Caco-2 (cell line): ENCODE measurements at regions of chr17 and their contacts with region 1.

Region 1: GRCh38 chr17:76671123-76671911 is 27.8 kb upstream of the ST6GALNAC1 start:
- DNase-seq: peak; percentile 100
- H3K4me3 ChIP-seq: peak overlapping the region; percentile 43
- H3K4me3 Mint-ChIP-seq: peak overlapping the region; percentile 85
- H3K27ac Mint-ChIP-seq: peak overlapping the region; percentile 94
- H3K4me1 ChIP-seq: peaks cover 20% of the 10 kb centered on the region
- H3K4me1 Mint-ChIP-seq: peaks cover 42% of the 10 kb centered on the region
- H3K27me3 ChIP-seq: no peaks in the 10 kb centered on the region
- H3K27me3 Mint-ChIP-seq: no peaks in the 10 kb centered on the region
- CTCF ChIP-seq: no peak

Region 2: GRCh38 chr17:76515274-76515949 is 155.9 kb before region 1 on chr17:
- CTCF ChIA-PET with region 1: interaction called, 10 read pairs
- POLR2A ChIA-PET with region 1: no interaction called
- intact Hi-C with region 1: no loop called
- DNase-seq: no peak
- H3K4me3 ChIP-seq: no peak overlapping the region
- H3K4me3 Mint-ChIP-seq: no peak overlapping the region
- H3K27ac Mint-ChIP-seq: no peak overlapping the region
- H3K4me1 ChIP-seq: no peaks in the 10 kb centered on the region
- H3K4me1 Mint-ChIP-seq: no peaks in the 10 kb centered on the region
- H3K27me3 ChIP-seq: no peaks in the 10 kb centered on the region
- H3K27me3 Mint-ChIP-seq: no peaks in the 10 kb centered on the region
- CTCF ChIP-seq: no peak

Region 3: DNA sequence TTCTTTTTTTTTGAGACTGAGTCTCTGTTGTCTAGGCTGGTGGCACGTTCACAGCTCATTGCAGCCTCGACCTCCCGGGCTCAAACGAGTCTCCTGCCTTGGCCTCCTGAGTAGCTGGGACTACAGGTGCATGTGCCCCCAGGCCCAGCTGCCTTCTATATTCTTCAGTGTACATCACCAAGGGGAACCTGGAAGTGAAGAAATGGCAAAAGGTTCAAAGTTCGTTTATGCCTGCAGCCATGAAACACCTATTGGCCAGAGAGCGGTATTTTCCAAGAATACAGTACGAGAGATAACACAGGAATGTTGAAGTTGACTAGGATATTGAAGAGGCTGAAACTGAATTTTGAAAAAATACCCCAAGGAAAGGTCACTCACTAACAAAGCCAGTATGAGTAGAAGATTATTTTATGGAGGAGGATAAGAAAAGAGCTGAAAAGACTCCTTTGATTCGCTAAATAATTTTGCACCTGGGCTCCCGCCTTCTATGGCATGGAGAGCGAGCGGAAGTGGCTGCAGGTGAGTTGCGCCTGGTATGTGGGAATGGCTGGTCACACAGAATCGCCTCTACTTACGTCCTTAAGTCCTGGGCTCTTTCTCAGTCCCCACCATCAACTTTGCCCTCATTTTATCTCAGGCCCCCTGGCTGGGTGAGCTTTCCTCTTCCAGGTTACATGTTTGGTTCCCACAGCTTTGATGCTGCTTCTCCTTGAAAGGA is 37.5 kb before region 1 on chr17:
- CTCF ChIA-PET with region 1: no interaction called
- POLR2A ChIA-PET with region 1: interaction called, 4 read pairs
- intact Hi-C with region 1: loop called (anchors 1 kb)
- DNase-seq: peak; percentile 82 to 84
- H3K4me3 ChIP-seq: no peak overlapping the region
- H3K4me3 Mint-ChIP-seq: peak overlapping the region; percentile 47
- H3K27ac Mint-ChIP-seq: peak overlapping the region; percentile 81
- H3K4me1 ChIP-seq: peaks cover 61% of the 10 kb centered on the region
- H3K4me1 Mint-ChIP-seq: peaks cover 46% of the 10 kb centered on the region
- H3K27me3 ChIP-seq: no peaks in the 10 kb centered on the region
- H3K27me3 Mint-ChIP-seq: no peaks in the 10 kb centered on the region
- CTCF ChIP-seq: no peak

Region 4: GRCh38 chr17:76641501-76641900 is 29.8 kb before region 1 on chr17:
- CTCF ChIA-PET with region 1: interaction called, 4 read pairs
- POLR2A ChIA-PET with region 1: interaction called, 7 read pairs
- intact Hi-C with region 1: loop called (anchors 1 kb)
- DNase-seq: peak; percentile 80 to 85
- H3K4me3 ChIP-seq: no peak overlapping the region
- H3K4me3 Mint-ChIP-seq: no peak overlapping the region
- H3K27ac Mint-ChIP-seq: peak overlapping the region; percentile 80
- H3K4me1 ChIP-seq: peaks cover 60% of the 10 kb centered on the region
- H3K4me1 Mint-ChIP-seq: peaks cover 61% of the 10 kb centered on the region
- H3K27me3 ChIP-seq: no peaks in the 10 kb centered on the region
- H3K27me3 Mint-ChIP-seq: no peaks in the 10 kb centered on the region
- CTCF ChIP-seq: no peak

Region 5: DNA sequence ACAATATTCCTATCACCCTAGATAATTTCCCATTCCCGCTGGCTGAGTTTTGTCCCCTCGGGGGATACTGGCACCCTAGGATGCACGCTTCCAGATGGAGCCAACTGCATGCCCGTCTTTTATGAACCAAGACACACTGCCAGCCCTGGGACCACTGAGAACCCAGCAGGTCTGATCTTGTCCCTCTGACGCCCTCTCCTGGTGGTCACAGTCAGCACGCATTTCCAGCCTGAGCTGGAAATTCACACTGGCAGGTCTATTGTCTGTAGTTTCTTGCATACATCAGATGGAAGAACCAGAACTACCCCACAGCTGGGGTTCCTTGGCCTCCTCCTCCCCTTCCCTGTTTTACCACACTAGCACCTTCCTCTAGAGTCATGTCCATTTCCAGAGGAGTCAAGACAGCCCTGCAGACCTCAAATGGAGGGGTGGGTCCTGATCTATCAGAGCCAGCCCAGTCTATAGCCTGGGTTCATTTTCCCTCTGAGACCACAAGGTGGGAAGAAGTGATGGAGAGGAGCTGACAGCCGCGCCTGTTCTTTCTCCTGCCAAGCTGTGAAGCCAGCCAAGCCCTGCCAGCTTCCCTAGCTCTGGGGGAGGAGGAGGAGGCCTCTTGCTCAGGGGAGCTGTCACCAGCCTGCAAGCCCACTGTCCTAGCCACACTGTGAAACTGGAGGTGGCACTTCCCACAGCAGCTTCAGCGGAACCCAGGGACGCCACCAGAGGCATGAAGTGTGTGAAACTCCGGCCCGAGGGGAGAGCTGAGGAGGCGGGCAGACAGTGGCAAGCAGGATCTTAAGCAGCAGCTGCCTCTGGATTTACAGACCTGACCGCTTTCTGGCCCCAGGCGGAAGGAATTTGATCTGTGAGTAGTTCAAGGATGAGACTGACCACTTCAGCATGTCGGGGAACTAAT is 10.2 kb after region 1 on chr17:
- CTCF ChIA-PET with region 1: interaction called, 20 read pairs
- POLR2A ChIA-PET with region 1: interaction called, 6 read pairs
- intact Hi-C with region 1: no loop called
- DNase-seq: peak; percentile 80
- H3K4me3 ChIP-seq: no peak overlapping the region
- H3K4me3 Mint-ChIP-seq: no peak overlapping the region
- H3K27ac Mint-ChIP-seq: no peak overlapping the region
- H3K4me1 ChIP-seq: peaks cover 14% of the 10 kb centered on the region
- H3K4me1 Mint-ChIP-seq: no peaks in the 10 kb centered on the region
- H3K27me3 ChIP-seq: no peaks in the 10 kb centered on the region
- H3K27me3 Mint-ChIP-seq: no peaks in the 10 kb centered on the region
- CTCF ChIP-seq: peak; percentile 87 to 91

Region 6: GRCh38 chr17:76714822-76715495 is 43.6 kb after region 1 on chr17:
- CTCF ChIA-PET with region 1: no interaction called
- POLR2A ChIA-PET with region 1: no interaction called
- intact Hi-C with region 1: loop called (anchors 5 kb)
- DNase-seq: peak; percentile 66 to 84
- H3K4me3 ChIP-seq: no peak overlapping the region
- H3K4me3 Mint-ChIP-seq: no peak overlapping the region
- H3K27ac Mint-ChIP-seq: no peak overlapping the region
- H3K4me1 ChIP-seq: peaks cover 5% of the 10 kb centered on the region; the same call in 1 of the 2 replicates
- H3K4me1 Mint-ChIP-seq: peaks cover 13% of the 10 kb centered on the region
- H3K27me3 ChIP-seq: no peaks in the 10 kb centered on the region
- H3K27me3 Mint-ChIP-seq: no peaks in the 10 kb centered on the region
- CTCF ChIP-seq: peak; percentile 82 to 89